Activated CD4-positive, alpha-beta T cell treated with anti-CD3 and anti-CD28 coated beads, Interleukin-2, amount 10 ng/mL, durations not matched to agents 24 days and 14 days (primary cell): ENCODE measurements at regions of chr19 and their contacts with region 1.

Region 1: DNA sequence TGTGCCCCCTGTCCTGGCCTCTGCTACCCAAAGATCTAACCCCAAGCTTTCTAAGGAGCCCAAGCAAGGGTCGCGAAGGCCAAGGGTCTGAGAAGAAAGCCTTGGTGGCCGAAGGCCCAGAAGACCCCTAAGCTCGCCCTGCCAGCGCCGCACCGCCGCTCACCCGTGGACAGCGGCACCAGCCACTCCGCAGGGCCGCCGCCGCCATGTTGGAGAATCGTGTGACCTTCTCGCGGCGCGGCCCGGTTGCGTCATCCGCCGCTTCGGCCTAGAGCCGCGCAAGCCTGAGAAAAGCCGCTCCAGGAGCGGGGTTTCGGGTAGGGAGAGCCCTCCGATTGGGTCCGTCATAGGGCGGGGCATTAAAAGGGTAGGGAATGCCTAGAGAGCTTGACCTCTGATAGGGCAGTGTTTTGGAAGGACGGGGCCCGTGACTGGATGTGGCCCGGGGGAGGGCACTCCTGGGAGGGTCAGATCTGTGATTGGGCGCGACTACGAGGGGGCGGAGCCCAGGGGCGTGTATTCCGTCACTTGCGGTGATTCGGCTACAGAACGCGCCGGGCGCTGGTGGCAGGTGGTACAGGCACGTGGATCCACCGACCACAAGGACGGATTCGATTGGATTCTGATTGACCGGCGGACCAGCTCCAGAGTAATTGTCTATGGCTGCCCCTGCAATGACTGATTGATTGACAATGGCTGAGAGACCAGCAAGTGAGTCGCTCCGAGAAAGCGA is at the start of gene TIMM44:
- DNase-seq: peak; percentile 100
- H3K4me3 Mint-ChIP-seq: peak within 1 kb of the TSS; percentile 98
- H3K27ac Mint-ChIP-seq: peak within 1 kb of the TSS; percentile 98
- H3K4me1 Mint-ChIP-seq: peaks cover 22% of the 10 kb centered on the region
- H3K27me3 Mint-ChIP-seq: no peaks in the 10 kb centered on the region
- total RNA-seq, gene TIMM44: 110 and 111 TPM in 2 replicates

Region 2: GRCh38 chr19:7903244-7904073 is 40.2 kb before region 1 on chr19 and contains the start of gene MAP2K7:
- intact Hi-C with region 1: loop called (anchors 1 kb)
- DNase-seq: peak; percentile 100
- H3K4me3 Mint-ChIP-seq: peak within 1 kb of the TSS; percentile 93
- H3K27ac Mint-ChIP-seq: peak within 1 kb of the TSS; percentile 96
- H3K4me1 Mint-ChIP-seq: peaks cover 25% of the 10 kb centered on the region
- H3K27me3 Mint-ChIP-seq: peaks cover 3% of the 10 kb centered on the region
- total RNA-seq, gene MAP2K7: 46.7 and 47.6 TPM in 2 replicates

Region 3: DNA sequence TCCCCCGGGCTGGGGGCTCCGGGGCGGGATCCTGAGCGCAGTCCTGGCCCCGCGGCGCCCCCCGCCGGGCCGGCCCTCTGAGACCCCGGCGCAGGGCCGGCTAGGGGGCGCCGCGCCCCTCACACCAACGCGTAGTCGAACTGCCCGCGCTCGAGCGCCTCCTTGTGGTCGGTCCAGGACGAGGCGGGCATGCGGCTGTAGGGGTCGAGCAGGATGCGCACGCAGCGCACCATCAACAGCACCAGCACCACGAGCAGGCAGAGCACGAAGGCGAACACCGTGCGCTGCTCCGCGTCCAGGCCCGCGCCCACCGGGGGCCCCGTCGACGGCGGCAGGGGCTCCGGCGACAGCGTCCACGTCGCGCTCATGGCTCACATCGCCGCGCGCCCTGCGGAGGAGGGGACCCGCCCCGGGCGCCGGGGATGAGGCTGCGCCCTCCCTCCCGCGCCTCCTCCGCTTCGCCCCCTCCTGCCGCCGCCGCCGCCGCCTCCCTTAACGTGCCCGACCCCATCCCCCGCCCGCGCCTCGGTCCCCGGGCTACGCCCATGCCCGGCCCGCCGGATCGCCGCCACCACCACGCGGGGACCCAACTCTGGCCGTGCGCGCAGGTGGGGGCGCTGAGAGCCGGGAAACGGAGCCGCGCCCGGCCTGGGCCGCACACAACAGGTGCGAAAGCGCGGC is 18.3 kb before region 1 on chr19:
- intact Hi-C with region 1: loop called (anchors 1 kb)
- DNase-seq: peak; percentile 94
- H3K4me3 Mint-ChIP-seq: peak overlapping the region; percentile 82
- H3K27ac Mint-ChIP-seq: peak overlapping the region; percentile 82
- H3K4me1 Mint-ChIP-seq: peaks cover 25% of the 10 kb centered on the region
- H3K27me3 Mint-ChIP-seq: peaks cover 2% of the 10 kb centered on the region

Region 4: GRCh38 chr19:8069096-8069973 is 125.7 kb after region 1 on chr19:
- intact Hi-C with region 1: loop called (anchors 2 kb)
- DNase-seq: peak; percentile 61
- H3K4me3 Mint-ChIP-seq: no peak overlapping the region
- H3K27ac Mint-ChIP-seq: no peak overlapping the region
- H3K4me1 Mint-ChIP-seq: no peaks in the 10 kb centered on the region
- H3K27me3 Mint-ChIP-seq: no peaks in the 10 kb centered on the region

Region 5: DNA sequence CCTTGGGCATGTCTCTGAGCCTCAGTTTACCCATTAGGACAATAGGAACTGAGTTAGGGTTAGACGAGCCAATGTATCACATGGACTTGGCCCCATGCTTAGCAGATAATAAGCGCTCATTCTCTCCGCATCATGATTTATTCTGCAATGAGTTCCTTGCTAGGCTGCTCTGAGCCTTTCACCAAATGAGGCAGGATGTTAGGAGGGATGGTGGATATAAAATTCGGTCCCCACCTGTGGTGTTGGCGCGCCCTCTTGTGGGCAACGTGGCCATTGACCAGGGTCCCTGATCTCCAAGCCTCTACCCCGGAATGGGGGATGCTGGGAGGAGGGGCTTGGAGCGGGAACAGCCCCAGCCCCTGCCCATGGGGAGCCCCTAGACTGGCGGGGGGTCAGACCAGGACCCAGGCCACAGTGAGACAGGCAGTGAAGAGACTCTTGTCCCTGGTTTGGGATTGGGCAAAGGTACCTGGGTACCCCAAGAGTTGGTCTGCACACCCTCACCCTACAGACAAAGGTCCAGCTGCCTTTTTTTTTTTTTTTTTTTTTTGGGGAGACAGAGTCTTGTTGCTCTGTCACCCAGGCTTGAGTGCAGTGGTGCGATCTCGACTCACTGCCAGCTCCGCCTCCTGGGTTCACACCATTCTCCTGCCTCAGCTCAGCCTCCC is 309.4 kb after region 1 on chr19:
- intact Hi-C with region 1: loop called (anchors 1 kb)
- DNase-seq: peak; percentile 95
- H3K4me3 Mint-ChIP-seq: no peak overlapping the region
- H3K27ac Mint-ChIP-seq: no peak overlapping the region
- H3K4me1 Mint-ChIP-seq: peaks cover 9% of the 10 kb centered on the region
- H3K27me3 Mint-ChIP-seq: no peaks in the 10 kb centered on the region